ENCODE measurements at regions of chr3 and their contacts with region 1.

Region 1: GRCh38 chr3:153768561-153769469 is 352.4 kb upstream of the ARHGEF26 start:
- DNase-seq: peak; percentile 30 to 55 (median 53)
- H3K4me3 ChIP-seq: no peak overlapping the region
- H3K4me3 Mint-ChIP-seq: no peak overlapping the region
- H3K27ac ChIP-seq: no peak overlapping the region
- H3K27ac Mint-ChIP-seq: no peak overlapping the region
- H3K4me1 ChIP-seq: no peaks in the 10 kb centered on the region
- H3K4me1 Mint-ChIP-seq: no peaks in the 10 kb centered on the region
- H3K27me3 ChIP-seq: no peaks in the 10 kb centered on the region
- H3K27me3 Mint-ChIP-seq: peaks cover 3 to 6% (median 4%) of the 10 kb centered on the region in 3 donors
- CTCF ChIP-seq: peak; percentile 81

Region 2: GRCh38 chr3:153026026-153026425 is 742.8 kb before region 1 on chr3:
- intact Hi-C with region 1: loop called (anchors 5 kb)
- DNase-seq: peak; percentile 14 to 48 (median 25)
- H3K4me3 ChIP-seq: no peak overlapping the region
- H3K4me3 Mint-ChIP-seq: no peak overlapping the region
- H3K27ac ChIP-seq: no peak overlapping the region
- H3K27ac Mint-ChIP-seq: no peak overlapping the region
- H3K4me1 ChIP-seq: no peaks in the 10 kb centered on the region
- H3K4me1 Mint-ChIP-seq: peaks cover 7% of the 10 kb centered on the region
- H3K27me3 ChIP-seq: no peaks in the 10 kb centered on the region
- H3K27me3 Mint-ChIP-seq: peaks cover 0 to 3% (median 2%) of the 10 kb centered on the region in 3 donors
- CTCF ChIP-seq: peak; percentile 75

Region 3: GRCh38 chr3:153734777-153735551 is 33.9 kb before region 1 on chr3:
- intact Hi-C with region 1: no loop called
- DNase-seq: no peak
- H3K4me3 ChIP-seq: no peak overlapping the region
- H3K4me3 Mint-ChIP-seq: no peak overlapping the region
- H3K27ac ChIP-seq: no peak overlapping the region
- H3K27ac Mint-ChIP-seq: no peak overlapping the region
- H3K4me1 ChIP-seq: no peaks in the 10 kb centered on the region
- H3K4me1 Mint-ChIP-seq: no peaks in the 10 kb centered on the region
- H3K27me3 ChIP-seq: no peaks in the 10 kb centered on the region
- H3K27me3 Mint-ChIP-seq: peaks cover 0 to 2% (median under 1%) of the 10 kb centered on the region in 3 donors
- CTCF ChIP-seq: no peak

Measured in CD14-positive monocyte (primary cell).